Spleen (tissue), 13 donors: ENCODE measurements at regions of chr21 and their contacts with region 1.

Region 1: GRCh38 chr21:33355355-33355754 is 30.6 kb downstream of the IFNAR1 start:
- DNase-seq: no peak
- H3K4me3 ChIP-seq: no peak overlapping the region
- H3K27ac ChIP-seq: peak overlapping the region in 7 of 8 donors; percentile 15 to 70 (median 38)
- H3K4me1 ChIP-seq: peaks cover under 1 to 44% (median 8%) of the 10 kb centered on the region in 6 donors
- H3K27me3 ChIP-seq: no peaks in the 10 kb centered on the region
- CTCF ChIP-seq: no peak
- POLR2A ChIP-seq: no peak

Region 2: GRCh38 chr21:33412832-33413519 is 57.6 kb after region 1 on chr21:
- intact Hi-C with region 1: no loop called
- DNase-seq: no peak
- H3K4me3 ChIP-seq: no peak overlapping the region
- H3K27ac ChIP-seq: peak overlapping the region in 5 of 8 donors; percentile 27 to 77 (median 53)
- H3K4me1 ChIP-seq: peaks cover 14 to 92% (median 53%) of the 10 kb centered on the region in 6 donors
- H3K27me3 ChIP-seq: no peaks in the 10 kb centered on the region
- CTCF ChIP-seq: no peak
- POLR2A ChIP-seq: no peak

Region 3: DNA sequence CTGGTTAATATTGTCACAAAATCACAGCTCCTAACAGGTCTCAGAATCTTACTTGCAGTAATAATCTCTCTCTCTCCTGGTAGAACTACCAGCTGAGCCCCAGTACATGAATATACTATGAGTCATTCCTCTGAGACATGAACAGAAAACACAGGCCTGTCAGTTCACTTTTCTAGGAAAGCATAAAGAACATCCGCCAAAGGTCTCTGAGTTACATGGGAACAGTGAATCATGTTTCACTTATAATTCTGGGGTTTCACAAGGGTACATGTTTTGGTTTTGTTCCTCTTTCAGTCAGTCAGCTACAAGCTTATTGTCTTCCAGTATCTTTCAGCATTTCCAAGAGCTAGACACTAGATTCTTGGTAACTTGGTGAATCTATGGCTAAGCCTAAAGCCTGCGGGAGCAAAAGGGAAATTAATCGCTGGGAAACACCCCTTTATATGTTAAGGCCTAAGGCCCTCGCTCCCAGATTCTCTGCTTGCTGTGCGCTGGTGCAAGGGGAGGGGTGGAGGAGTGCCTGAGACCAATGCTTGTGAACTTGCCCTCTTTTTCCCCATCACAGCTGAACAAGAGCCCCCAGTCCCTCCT is 79.5 kb after region 1 on chr21:
- intact Hi-C with region 1: loop called (anchors 10 kb)
- DNase-seq: no peak
- H3K4me3 ChIP-seq: no peak overlapping the region
- H3K27ac ChIP-seq: peak overlapping the region; percentile 40 to 80 (median 69)
- H3K4me1 ChIP-seq: peaks cover 14 to 53% (median 35%) of the 10 kb centered on the region in 6 donors
- H3K27me3 ChIP-seq: no peaks in the 10 kb centered on the region
- CTCF ChIP-seq: no peak
- POLR2A ChIP-seq: no peak

Region 4: DNA sequence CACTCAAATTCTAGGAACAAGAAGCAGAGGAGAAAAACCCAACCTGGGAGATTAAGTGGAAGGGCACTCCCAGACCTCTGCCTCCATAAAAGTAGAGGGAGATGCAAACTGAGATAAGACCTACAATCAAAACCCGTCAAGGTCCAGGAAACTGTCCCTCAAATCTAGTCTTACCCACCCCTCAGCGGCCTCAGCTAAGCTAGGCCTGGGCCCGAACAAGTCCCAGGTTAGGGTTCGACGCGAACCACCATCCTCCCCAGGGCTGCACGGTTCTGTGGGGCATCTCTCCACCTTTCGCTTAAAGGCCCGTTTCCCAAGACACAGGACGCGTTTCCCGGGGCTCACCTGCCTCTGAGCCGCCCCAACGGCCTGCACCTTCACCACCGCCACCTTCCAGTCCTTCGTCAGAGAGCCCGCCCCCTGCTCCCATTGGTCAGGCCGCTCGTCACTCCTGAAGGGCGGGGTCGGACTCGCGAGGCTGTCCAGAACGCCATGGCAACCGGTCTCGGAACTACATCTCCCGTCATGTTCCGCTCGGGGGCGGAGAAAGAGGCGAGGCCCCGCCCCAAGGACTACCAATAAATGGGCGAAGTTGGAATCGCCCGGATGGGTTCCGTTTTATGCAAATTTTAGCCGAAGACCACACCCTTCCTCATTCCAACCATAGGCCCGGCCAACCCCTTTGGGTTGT is 286.1 kb after region 1 on chr21 and contains the start of gene CRYZL1:
- intact Hi-C with region 1: no loop called
- DNase-seq: peak; percentile 100
- H3K4me3 ChIP-seq: peak within 1 kb of the TSS; percentile 77 to 100 (median 94)
- H3K27ac ChIP-seq: peak within 1 kb of the TSS; percentile 79 to 94 (median 91)
- H3K4me1 ChIP-seq: peaks cover 3 to 73% (median 39%) of the 10 kb centered on the region in 6 donors
- H3K27me3 ChIP-seq: peaks cover 0 to 26% (median 3%) of the 10 kb centered on the region in 7 donors
- CTCF ChIP-seq: peak in 3 of 11 experiments; percentile 13 to 29 (median 24)
- POLR2A ChIP-seq: no peak
- total RNA-seq, gene CRYZL1: 30.2 to 54.9 (median 40.2) TPM